Right cardiac atrium (tissue), 5 donors: ENCODE measurements at regions of chr4 and their contacts with region 1.

Region 1: GRCh38 chr4:145732895-145733880 is 53.2 kb downstream of the C4orf51 start:
- DNase-seq: peak; percentile 97 to 99 (median 98)
- ATAC-seq: peak; percentile 96 to 98
- H3K4me3 ChIP-seq: peak overlapping the region; percentile 65
- H3K27ac ChIP-seq: peak overlapping the region; percentile 100
- H3K4me1 ChIP-seq: peaks cover 24% of the 10 kb centered on the region
- H3K27me3 ChIP-seq: no peaks in the 10 kb centered on the region

Region 2: GRCh38 chr4:145785391-145786008 is 52.3 kb after region 1 on chr4:
- intact Hi-C with region 1: no loop called
- DNase-seq: no peak
- ATAC-seq: peak; percentile 47 to 51
- H3K4me3 ChIP-seq: no peak overlapping the region
- H3K27ac ChIP-seq: no peak overlapping the region
- H3K4me1 ChIP-seq: peaks cover 2% of the 10 kb centered on the region
- H3K27me3 ChIP-seq: no peaks in the 10 kb centered on the region

Region 3: DNA sequence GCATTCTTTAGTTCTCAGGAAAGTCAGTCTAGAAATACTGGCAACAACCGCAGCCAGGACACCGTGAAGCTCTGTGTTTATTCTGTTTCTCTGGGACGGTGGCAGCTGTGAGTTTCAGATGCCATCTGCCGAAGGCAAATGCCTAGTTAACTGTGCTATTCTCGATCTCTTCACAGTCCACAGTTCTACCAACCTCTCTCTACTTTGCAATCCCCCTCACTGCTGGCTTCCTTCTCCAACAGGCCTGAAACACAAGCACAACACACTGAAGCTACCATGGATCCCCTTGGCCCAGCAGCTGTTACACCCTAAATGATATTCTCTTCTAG is 86.6 kb after region 1 on chr4:
- intact Hi-C with region 1: loop called in 1 of 4 experiments (anchors 10 kb)
- DNase-seq: no peak
- ATAC-seq: peak; percentile 36 to 74
- H3K4me3 ChIP-seq: no peak overlapping the region
- H3K27ac ChIP-seq: peak overlapping the region; percentile 51
- H3K4me1 ChIP-seq: no peaks in the 10 kb centered on the region
- H3K27me3 ChIP-seq: no peaks in the 10 kb centered on the region

Region 4: GRCh38 chr4:145936142-145936996 is 203.2 kb after region 1 on chr4:
- intact Hi-C with region 1: loop called in 2 of 4 experiments (anchors 10 kb)
- DNase-seq: peak; percentile 63 to 88 (median 80)
- ATAC-seq: peak; percentile 71 to 74
- H3K4me3 ChIP-seq: peak overlapping the region; percentile 99
- H3K27ac ChIP-seq: peak overlapping the region; percentile 84
- H3K4me1 ChIP-seq: peaks cover 2% of the 10 kb centered on the region
- H3K27me3 ChIP-seq: no peaks in the 10 kb centered on the region